ENCODE measurements at regions of chr11 and their contacts with region 1.

Region 1: GRCh38 chr11:10735481-10736475 is 15.3 kb upstream of the CTR9 start:
- DNase-seq: peak; percentile 83 to 93 (median 90)
- H3K4me3 ChIP-seq: peak overlapping the region in 55 of 59 donors; percentile 2 to 60 (median 37)
- H3K27ac ChIP-seq: peak overlapping the region in 49 of 59 donors; percentile 24 to 82 (median 69)
- H3K27me3 ChIP-seq: no peaks in the 10 kb centered on the region
- CTCF ChIP-seq: peak; percentile 92 to 100 (median 99)

Region 2: GRCh38 chr11:10405855-10406592 is 329.8 kb before region 1 on chr11:
- intact Hi-C with region 1: loop called (anchors 2 kb)
- DNase-seq: peak in 9 of 10 donors; percentile 57 to 87 (median 79)
- H3K4me3 ChIP-seq: peak overlapping the region in 1 of 59 donors; percentile 19
- H3K27ac ChIP-seq: peak overlapping the region in 1 of 59 donors; percentile 33
- H3K27me3 ChIP-seq: no peaks in the 10 kb centered on the region
- CTCF ChIP-seq: peak; percentile 63 to 97 (median 84)

Region 3: GRCh38 chr11:10526974-10527918 is 208.5 kb before region 1 on chr11:
- intact Hi-C with region 1: no loop called
- DNase-seq: peak in 1 of 10 donors; percentile 46
- H3K4me3 ChIP-seq: peak overlapping the region in 8 of 59 donors; percentile 3 to 13 (median 8)
- H3K27ac ChIP-seq: peak overlapping the region in 57 of 59 donors; percentile 63 to 98 (median 89)
- H3K27me3 ChIP-seq: no peaks in the 10 kb centered on the region
- CTCF ChIP-seq: no peak

Region 4: GRCh38 chr11:10540923-10541560 is 194.7 kb before region 1 on chr11 and contains the start of gene RNF141:
- intact Hi-C with region 1: loop called in 1 of 2 experiments (anchors 5 kb)
- DNase-seq: peak; percentile 90 to 97 (median 94)
- H3K4me3 ChIP-seq: peak within 1 kb of the TSS; percentile 63 to 99 (median 91)
- H3K27ac ChIP-seq: peak within 1 kb of the TSS; percentile 51 to 96 (median 91)
- H3K27me3 ChIP-seq: no peaks in the 10 kb centered on the region
- CTCF ChIP-seq: peak; percentile 64 to 95 (median 89)
- total RNA-seq, gene RNF141: 47.2 to 142 (median 77.9) TPM

Region 5: DNA sequence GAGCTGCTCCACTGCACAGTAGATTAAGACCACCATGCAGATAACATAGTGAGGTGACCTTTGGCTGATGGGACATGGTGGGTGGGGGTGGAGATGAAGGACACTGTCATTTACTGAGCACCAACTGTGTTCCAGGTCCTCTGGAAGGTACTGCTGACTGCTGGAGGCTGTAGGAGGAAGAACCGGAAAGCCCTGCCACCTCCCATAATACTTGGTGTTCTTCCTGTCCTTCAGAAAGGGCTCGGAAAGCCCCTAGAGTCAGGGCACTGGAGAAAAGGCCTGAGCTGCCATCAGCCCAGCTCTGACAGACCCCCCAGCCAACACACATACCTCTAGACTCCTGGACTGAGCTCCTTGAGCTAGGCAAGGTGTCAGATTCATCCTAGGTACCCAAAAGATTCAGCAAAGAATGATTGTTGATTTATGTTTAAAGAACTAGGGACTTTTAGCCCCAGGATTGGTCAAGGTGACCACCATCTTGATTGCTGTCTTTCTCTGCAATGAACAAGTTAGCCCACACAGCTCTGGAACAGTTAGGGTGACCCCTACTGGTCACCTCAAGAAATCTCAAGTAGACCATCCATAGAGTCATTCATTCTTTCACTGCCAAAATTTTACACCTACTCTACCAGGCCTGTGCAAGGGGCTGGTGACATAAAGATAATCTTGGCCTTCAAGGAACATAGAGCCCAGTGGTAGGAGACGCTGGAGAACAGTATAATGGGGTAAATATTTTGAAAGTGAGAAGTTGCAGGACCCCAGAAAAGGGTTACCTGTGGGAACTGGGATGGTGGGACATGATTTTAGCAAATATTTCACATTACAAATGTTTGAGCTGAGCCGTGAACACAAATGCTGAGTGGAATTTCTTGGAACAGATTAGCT is 81.6 kb before region 1 on chr11:
- intact Hi-C with region 1: loop called (anchors 5 to 10 kb)
- DNase-seq: no peak
- H3K4me3 ChIP-seq: no peak overlapping the region
- H3K27ac ChIP-seq: peak overlapping the region in 29 of 59 donors; percentile 4 to 71 (median 35)
- H3K27me3 ChIP-seq: no peaks in the 10 kb centered on the region
- CTCF ChIP-seq: peak; percentile 40 to 88 (median 75)